CD8-positive, alpha-beta T cell (primary cell): ENCODE measurements at regions of chr9 and their contacts with region 1.

Region 1: GRCh38 chr9:78439190-78439865 is 142.4 kb downstream of the PSAT1 start:
- DNase-seq: peak; percentile 20 to 75 (median 62)
- ATAC-seq: peak; percentile 46
- H3K4me3 ChIP-seq: no peak overlapping the region
- H3K4me3 Mint-ChIP-seq: no peak overlapping the region
- H3K27ac ChIP-seq: no peak overlapping the region
- H3K27ac Mint-ChIP-seq: no peak overlapping the region
- H3K4me1 ChIP-seq: no peaks in the 10 kb centered on the region
- H3K4me1 Mint-ChIP-seq: peaks cover 5% of the 10 kb centered on the region
- H3K27me3 ChIP-seq: peaks cover 0 to 4% of the 10 kb centered on the region in 2 experiments
- H3K27me3 Mint-ChIP-seq: peaks cover 33% of the 10 kb centered on the region
- CTCF ChIP-seq: peak; percentile 96

Region 2: DNA sequence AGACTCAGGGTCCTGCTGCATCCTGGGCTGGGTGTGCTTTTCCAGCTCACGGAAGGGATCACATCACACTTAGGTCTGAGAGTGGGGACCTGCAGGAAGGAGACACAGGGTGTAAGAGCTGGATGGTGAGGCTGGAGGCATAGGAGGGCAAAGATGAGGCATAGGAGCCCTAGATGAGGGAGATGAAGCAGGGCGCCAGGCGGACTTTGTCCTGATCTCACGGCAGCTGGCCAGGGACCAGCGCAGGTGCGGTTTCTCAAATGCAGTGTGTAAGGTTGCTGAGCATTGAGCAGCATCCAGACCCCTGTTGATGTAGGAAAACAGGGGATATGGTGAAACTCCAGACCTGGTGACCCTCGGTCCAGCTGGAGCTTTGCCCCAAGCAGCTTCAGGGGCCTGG is 14.1 kb after region 1 on chr9:
- CTCF ChIA-PET with region 1: interaction called, 28 read pairs
- POLR2A ChIA-PET with region 1: no interaction called
- intact Hi-C with region 1: no loop called
- DNase-seq: no peak
- ATAC-seq: no peak
- H3K4me3 ChIP-seq: no peak overlapping the region
- H3K4me3 Mint-ChIP-seq: no peak overlapping the region
- H3K27ac ChIP-seq: no peak overlapping the region
- H3K27ac Mint-ChIP-seq: no peak overlapping the region
- H3K4me1 ChIP-seq: no peaks in the 10 kb centered on the region
- H3K4me1 Mint-ChIP-seq: no peaks in the 10 kb centered on the region
- H3K27me3 ChIP-seq: no peaks in the 10 kb centered on the region
- H3K27me3 Mint-ChIP-seq: peaks cover 11% of the 10 kb centered on the region
- CTCF ChIP-seq: no peak

Region 3: GRCh38 chr9:78468231-78468630 is 28.9 kb after region 1 on chr9:
- CTCF ChIA-PET with region 1: interaction called, 14 read pairs
- POLR2A ChIA-PET with region 1: no interaction called
- intact Hi-C with region 1: no loop called
- DNase-seq: no peak
- ATAC-seq: no peak
- H3K4me3 ChIP-seq: no peak overlapping the region
- H3K4me3 Mint-ChIP-seq: no peak overlapping the region
- H3K27ac ChIP-seq: no peak overlapping the region
- H3K27ac Mint-ChIP-seq: no peak overlapping the region
- H3K4me1 ChIP-seq: no peaks in the 10 kb centered on the region
- H3K4me1 Mint-ChIP-seq: no peaks in the 10 kb centered on the region
- H3K27me3 ChIP-seq: no peaks in the 10 kb centered on the region
- H3K27me3 Mint-ChIP-seq: peaks cover 12% of the 10 kb centered on the region
- CTCF ChIP-seq: no peak